ENCODE measurements at regions of chr17 and their contacts with region 1.

Region 1: DNA sequence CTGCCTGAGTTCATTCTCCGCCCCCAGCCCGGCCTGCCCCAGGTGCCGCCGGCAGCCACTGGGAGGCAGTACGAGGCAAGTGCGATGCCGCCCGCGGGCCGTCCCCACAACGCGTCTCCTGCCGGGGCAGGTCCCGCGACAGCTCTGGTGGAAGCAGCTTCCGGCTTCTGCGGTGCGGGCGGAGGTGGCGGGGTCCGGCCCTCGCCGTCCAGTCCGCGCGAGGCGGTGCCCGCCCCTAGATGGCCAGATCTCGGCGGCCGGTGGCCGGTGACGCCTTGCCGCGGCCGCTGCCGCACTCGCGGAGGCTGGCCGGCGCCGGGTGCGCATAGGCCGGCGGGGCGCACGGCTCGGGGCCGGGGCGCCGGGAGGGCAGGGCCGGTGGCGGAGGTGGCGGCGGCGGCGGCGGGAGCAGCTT is 1.8 kb downstream of the GJD3 start:
- DNase-seq: peak; percentile 74 to 90 (median 88)
- H3K4me3 ChIP-seq: peak overlapping the region; percentile 25 to 75 (median 55)
- H3K27ac ChIP-seq: no peak overlapping the region
- H3K4me1 ChIP-seq: peaks cover 3 to 34% (median 28%) of the 10 kb centered on the region in 4 experiments
- H3K27me3 ChIP-seq: peaks cover 0 to 30% (median 0%) of the 10 kb centered on the region in 5 experiments

Region 2: GRCh38 chr17:40349920-40350909 is 12.5 kb before region 1 on chr17:
- CTCF ChIA-PET with region 1: interaction called, 11 read pairs
- POLR2A ChIA-PET with region 1: interaction called, 3 read pairs
- DNase-seq: no peak
- H3K4me3 ChIP-seq: no peak overlapping the region
- H3K27ac ChIP-seq: no peak overlapping the region
- H3K4me1 ChIP-seq: peaks cover 8 to 82% (median 62%) of the 10 kb centered on the region in 4 experiments
- H3K27me3 ChIP-seq: no peaks in the 10 kb centered on the region

Region 3: GRCh38 chr17:40374821-40375498 is 12.3 kb after region 1 on chr17:
- CTCF ChIA-PET with region 1: interaction called, 10 read pairs
- POLR2A ChIA-PET with region 1: no interaction called
- DNase-seq: no peak
- H3K4me3 ChIP-seq: no peak overlapping the region
- H3K27ac ChIP-seq: no peak overlapping the region
- H3K4me1 ChIP-seq: peaks cover 3 to 8% (median 6%) of the 10 kb centered on the region in 4 experiments
- H3K27me3 ChIP-seq: no peaks in the 10 kb centered on the region

Region 4: GRCh38 chr17:40410082-40410481 is 47.4 kb after region 1 on chr17:
- CTCF ChIA-PET with region 1: interaction called, 18 read pairs
- POLR2A ChIA-PET with region 1: no interaction called
- DNase-seq: no peak
- H3K4me3 ChIP-seq: no peak overlapping the region
- H3K27ac ChIP-seq: no peak overlapping the region
- H3K4me1 ChIP-seq: no peaks in the 10 kb centered on the region
- H3K27me3 ChIP-seq: no peaks in the 10 kb centered on the region

Region 5: DNA sequence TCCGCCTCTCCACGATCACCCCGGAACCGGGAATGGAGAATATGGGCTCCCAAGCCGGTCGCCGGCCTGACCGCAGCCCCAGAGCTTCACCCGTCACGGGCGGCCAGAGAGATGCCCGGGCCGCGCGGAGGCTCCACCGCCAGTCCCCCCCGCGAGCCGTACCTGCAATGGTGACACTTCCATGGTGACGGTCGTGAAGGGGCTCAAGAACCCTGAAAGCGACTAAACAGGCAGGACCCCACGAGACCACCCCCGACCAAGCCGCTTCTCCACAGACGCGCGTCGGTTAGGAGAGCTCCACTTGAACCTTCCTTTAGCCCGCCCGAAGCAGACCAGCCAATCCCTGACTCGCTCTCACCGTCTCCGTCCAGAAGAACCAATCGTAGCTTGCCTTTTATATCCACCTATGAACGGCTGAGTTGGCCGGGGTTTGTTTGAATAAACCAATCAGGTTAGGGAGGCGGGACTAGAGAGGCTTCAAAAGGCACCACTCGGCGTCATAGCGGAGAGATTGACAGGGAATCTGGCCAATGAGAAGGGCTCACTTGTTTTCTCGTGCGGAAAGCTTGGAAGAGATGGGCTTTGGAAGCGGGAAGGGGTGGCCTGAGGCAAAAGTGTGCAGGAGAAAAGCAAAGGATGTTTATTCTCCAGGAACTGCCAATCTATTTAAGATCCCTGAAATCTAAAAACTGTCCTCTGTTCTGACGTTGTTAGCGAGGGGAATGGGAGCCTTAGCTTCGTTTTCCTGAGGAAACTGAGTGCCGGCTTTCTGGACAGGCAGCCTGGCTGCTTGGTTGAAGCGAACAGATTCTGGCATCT is 55.1 kb after region 1 on chr17 and contains the start of gene TOP2A:
- CTCF ChIA-PET with region 1: interaction called, 18 read pairs
- POLR2A ChIA-PET with region 1: interaction called, 3 read pairs
- DNase-seq: peak; percentile 99 to 100 (median 99)
- H3K4me3 ChIP-seq: peak within 1 kb of the TSS; percentile 85 to 100 (median 94)
- H3K27ac ChIP-seq: peak within 1 kb of the TSS in 1 of 2 experiments; percentile 76
- H3K4me1 ChIP-seq: peaks cover 12 to 42% (median 30%) of the 10 kb centered on the region in 4 experiments
- H3K27me3 ChIP-seq: no peaks in the 10 kb centered on the region

Region 6: DNA sequence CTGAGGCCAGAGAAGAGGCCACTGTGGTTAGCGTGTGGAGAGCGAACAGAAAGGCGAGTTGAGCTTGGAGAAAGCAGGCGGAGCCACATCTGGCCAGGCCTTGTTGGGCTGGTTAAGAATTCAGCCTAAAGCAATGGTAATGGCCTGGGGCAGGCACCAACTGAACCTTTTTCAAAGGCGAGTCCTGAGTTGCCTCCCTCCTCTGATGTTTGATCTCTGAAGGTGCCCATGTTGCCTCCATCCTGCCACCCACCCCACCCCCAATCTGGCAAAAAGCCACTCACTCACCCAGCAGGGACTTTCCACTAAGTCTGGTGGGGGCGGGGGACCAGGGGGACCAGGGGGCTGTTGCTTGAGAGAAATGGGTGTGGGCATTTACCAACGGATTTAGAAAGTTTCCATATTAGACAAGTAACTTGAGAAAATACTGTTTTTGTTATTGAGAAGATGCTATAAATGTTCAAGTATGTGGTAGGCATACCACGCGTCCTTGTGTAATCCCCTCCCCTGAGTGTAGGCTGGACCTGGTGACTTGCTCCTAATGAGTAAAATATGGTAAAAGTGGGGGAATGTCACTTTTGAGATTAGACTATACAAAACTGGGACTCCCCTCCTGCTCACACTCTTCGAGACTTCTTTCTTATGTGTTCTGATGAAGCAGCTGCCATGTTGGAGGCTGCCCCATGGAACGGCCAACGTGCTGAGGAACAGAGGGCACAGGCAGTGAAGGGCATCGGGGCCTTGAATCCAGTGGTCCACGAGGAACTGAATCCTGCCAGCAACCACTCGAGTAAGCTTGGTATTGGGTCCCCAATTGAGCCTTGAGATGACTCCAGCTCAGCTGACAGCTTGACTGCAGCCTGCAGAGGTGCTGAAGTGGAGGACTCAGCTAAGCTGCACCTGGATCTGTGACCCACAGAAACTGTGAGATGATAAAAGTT is 168.6 kb after region 1 on chr17:
- CTCF ChIA-PET with region 1: interaction called, 18 read pairs
- POLR2A ChIA-PET with region 1: no interaction called
- DNase-seq: peak in 1 of 3 donors; percentile 23
- H3K4me3 ChIP-seq: no peak overlapping the region
- H3K27ac ChIP-seq: no peak overlapping the region
- H3K4me1 ChIP-seq: peaks cover 4 to 22% (median 9%) of the 10 kb centered on the region in 4 experiments
- H3K27me3 ChIP-seq: peaks cover 0 to 5% (median 0%) of the 10 kb centered on the region in 5 experiments

Region 7: GRCh38 chr17:40647624-40648383 is 285.1 kb after region 1 on chr17 and contains the start of gene SMARCE1:
- CTCF ChIA-PET with region 1: no interaction called
- POLR2A ChIA-PET with region 1: no interaction called
- DNase-seq: peak; percentile 82 to 88 (median 84)
- H3K4me3 ChIP-seq: peak within 1 kb of the TSS; percentile 64 to 98 (median 91)
- H3K27ac ChIP-seq: peak within 1 kb of the TSS; percentile 100
- H3K4me1 ChIP-seq: peaks cover 7 to 28% (median 18%) of the 10 kb centered on the region in 4 experiments
- H3K27me3 ChIP-seq: no peaks in the 10 kb centered on the region